ENCODE measurements at regions of chr12 and their contacts with region 1.

Region 1: GRCh38 chr12:51531978-51532497 is 59.0 kb upstream of the SCN8A start:
- DNase-seq: peak; percentile 64 to 74
- ATAC-seq: peak; percentile 78 to 89 (median 84)
- H3K4me3 ChIP-seq: no peak overlapping the region
- H3K27ac ChIP-seq: no peak overlapping the region
- H3K4me1 ChIP-seq: no peaks in the 10 kb centered on the region
- H3K27me3 ChIP-seq: peaks cover 0 to 27% (median 2%) of the 10 kb centered on the region in 3 donors
- CTCF ChIP-seq: peak; percentile 82

Region 2: DNA sequence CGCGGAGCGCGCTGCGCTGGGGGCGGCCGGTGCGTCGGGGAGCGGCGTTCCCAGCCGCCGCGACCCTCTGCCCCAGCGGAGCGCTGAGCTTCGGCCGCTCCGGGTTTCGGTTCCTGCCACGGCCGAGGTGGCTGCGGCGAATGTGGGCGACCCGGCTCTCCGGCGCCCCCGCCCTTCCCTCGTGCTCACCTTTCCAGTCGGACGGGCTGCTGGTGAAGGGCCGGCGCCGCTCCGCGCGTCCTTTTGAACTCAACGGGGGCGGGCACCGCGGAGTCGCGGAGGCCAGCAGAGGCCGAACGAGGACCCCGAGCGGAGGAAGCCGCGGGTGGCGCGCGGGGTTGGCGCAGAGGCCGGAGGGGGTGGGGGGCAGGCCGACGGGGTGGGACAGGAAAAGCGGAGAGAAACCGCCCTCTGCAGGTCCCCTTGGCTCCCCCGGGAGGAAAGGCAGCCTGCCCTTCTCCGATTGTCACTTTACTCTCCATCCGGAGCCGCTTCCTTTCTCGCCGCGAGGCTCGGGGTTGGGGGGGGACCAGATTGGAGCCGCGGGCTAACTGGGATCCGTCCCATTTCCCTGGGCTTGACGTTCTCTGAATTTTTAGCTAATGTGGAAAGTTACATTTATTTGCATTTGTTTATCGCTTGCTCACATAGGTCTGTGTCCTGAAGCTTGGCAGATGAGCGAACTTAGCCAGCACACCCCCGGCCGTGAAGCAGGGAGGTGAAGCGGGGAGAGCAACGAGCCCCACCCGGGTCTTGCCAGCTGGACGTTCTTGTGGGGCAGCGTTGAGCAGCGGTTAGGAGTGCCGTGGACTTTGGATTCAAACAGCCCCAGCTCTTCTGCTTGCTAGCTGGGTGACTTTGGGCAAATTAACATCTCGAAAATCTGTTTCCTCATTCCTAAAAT is 261.7 kb before region 1 on chr12 and contains the start of gene SMAGP:
- intact Hi-C with region 1: loop called in 1 of 2 experiments (anchors 5 kb)
- DNase-seq: peak; percentile 52 to 68
- ATAC-seq: peak; percentile 64 to 75 (median 70)
- H3K4me3 ChIP-seq: peak within 1 kb of the TSS; percentile 77
- H3K27ac ChIP-seq: peak within 1 kb of the TSS; percentile 36
- H3K4me1 ChIP-seq: no peaks in the 10 kb centered on the region
- H3K27me3 ChIP-seq: peaks cover 0 to 29% (median 0%) of the 10 kb centered on the region in 3 donors
- CTCF ChIP-seq: no peak
- total RNA-seq, gene SMAGP: 1.8 to 2.9 (median 2.2) TPM

Region 3: DNA sequence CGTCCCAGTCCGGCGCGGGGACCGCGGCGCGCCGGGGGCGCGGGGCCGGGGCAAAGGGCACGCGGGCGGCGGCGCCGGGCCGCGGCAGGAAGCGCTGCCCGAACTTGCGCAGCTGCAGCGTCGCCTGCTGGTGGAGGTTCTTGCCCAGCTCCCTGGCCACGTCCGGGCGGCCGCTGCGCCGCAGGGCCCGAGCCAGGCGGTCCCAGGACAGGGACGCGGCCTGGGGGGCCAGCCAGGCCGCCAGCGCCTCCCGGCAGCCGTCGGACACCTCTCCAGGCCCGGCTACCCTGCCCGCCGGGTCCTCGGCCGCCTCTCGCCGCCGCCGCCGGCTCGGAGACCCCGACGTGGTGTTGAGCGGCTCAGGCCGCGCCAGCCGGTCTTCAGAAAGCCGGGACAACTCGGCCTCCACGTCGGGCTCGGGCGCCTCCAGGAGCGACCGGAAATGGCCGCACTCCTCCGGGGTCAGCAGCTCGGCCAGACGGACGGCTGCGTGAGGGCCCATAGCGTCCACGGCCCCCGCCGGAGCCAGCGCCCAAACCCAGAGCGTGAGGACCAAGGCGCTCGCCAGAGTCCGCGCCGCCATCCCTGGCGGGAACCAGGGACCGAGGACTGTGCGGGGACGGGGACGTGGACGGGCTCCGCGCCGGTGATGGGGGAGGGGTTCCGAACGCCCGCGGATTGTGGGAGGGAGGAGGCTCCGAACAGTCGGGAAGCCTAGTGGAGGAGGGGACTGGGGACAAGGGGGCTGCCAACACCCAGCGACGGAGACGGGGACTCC is 282.5 kb after region 1 on chr12:
- intact Hi-C with region 1: loop called in 1 of 2 experiments (anchors 5 kb)
- DNase-seq: peak; percentile 77 to 89
- ATAC-seq: peak; percentile 65 to 83 (median 74)
- H3K4me3 ChIP-seq: peak overlapping the region; percentile 68
- H3K27ac ChIP-seq: peak overlapping the region; percentile 73
- H3K4me1 ChIP-seq: no peaks in the 10 kb centered on the region
- H3K27me3 ChIP-seq: peaks cover 0 to 43% (median 8%) of the 10 kb centered on the region in 3 donors
- CTCF ChIP-seq: peak; percentile 64